ENCODE measurements at regions of chr18 and their contacts with region 1.

Region 1: DNA sequence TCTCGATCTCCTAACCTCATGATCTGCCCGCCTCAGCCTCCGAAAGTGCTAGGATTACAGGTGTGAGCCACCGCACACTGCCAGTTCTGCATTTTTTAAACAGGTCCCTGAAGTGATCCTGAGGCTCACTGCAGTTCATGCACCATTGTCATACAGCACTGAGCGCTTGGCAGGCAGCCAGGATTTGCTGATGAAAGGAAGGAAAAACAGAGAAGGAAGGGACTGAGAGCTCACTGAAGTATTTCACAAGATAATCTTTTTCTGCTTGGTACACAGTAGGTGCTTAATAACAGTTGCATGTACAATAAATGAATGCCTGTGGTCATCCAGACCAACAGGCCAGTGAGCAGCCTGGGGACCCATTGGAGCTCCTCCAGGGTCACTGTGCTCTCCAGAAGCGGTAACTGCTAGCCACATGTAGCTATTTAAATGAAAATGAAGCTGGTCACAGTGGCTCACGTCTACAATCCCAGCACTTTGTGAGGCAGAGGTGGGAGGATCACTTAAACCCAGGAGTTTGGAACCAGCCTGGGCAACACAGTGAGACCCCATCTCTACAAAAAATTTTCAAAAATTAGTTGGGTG is 33.1 kb upstream of the SMAD7 start:
- DNase-seq: peak; percentile 57
- H3K4me3 ChIP-seq: no peak overlapping the region
- H3K27ac ChIP-seq: no peak overlapping the region
- H3K4me1 ChIP-seq: no peaks in the 10 kb centered on the region
- H3K27me3 ChIP-seq: no peaks in the 10 kb centered on the region
- CTCF ChIP-seq: no peak

Region 2: GRCh38 chr18:48719974-48720654 is 263.7 kb before region 1 on chr18:
- intact Hi-C with region 1: no loop called
- DNase-seq: no peak
- H3K4me3 ChIP-seq: no peak overlapping the region
- H3K27ac ChIP-seq: no peak overlapping the region
- H3K4me1 ChIP-seq: peaks cover 38% of the 10 kb centered on the region
- H3K27me3 ChIP-seq: no peaks in the 10 kb centered on the region
- CTCF ChIP-seq: no peak

Region 3: GRCh38 chr18:49031511-49032188 is 47.8 kb after region 1 on chr18:
- intact Hi-C with region 1: loop called (anchors 10 kb)
- DNase-seq: no peak
- H3K4me3 ChIP-seq: no peak overlapping the region
- H3K27ac ChIP-seq: no peak overlapping the region
- H3K4me1 ChIP-seq: no peaks in the 10 kb centered on the region
- H3K27me3 ChIP-seq: no peaks in the 10 kb centered on the region
- CTCF ChIP-seq: no peak

Measured in left ventricle myocardium inferior (tissue), 1 donor.